ENCODE measurements at regions of chr17 and their contacts with region 1.

Region 1: GRCh38 chr17:75205037-75205792 is at the start of gene NUP85:
- DNase-seq: peak; percentile 65 to 95
- H3K4me3 ChIP-seq: peak within 1 kb of the TSS; percentile 81 to 98
- H3K27ac ChIP-seq: peak within 1 kb of the TSS; percentile 84 to 91
- H3K4me1 ChIP-seq: peaks cover 0 to 7% of the 10 kb centered on the region in 2 donors
- H3K27me3 ChIP-seq: no peaks in the 10 kb centered on the region
- CTCF ChIP-seq: peak in 1 of 3 experiments; percentile 14
- total RNA-seq, gene NUP85: 38.1 TPM

Region 2: GRCh38 chr17:75046582-75047289 is 158.5 kb before region 1 on chr17 and contains the starts of genes ATP5PD and KCTD2:
- intact Hi-C with region 1: loop called (anchors 1 kb)
- DNase-seq: peak; percentile 88 to 98
- H3K4me3 ChIP-seq: peak within 1 kb of the TSS; percentile 64 to 74
- H3K27ac ChIP-seq: peak within 1 kb of the TSS; percentile 90
- H3K4me1 ChIP-seq: peaks cover 9 to 13% of the 10 kb centered on the region in 2 donors
- H3K27me3 ChIP-seq: no peaks in the 10 kb centered on the region
- CTCF ChIP-seq: no peak
- total RNA-seq, gene ATP5PD: 133 TPM
- total RNA-seq, gene KCTD2: 31.4 TPM

Region 3: GRCh38 chr17:75182569-75183450 is 22.4 kb before region 1 on chr17 and contains the start of gene SUMO2:
- intact Hi-C with region 1: loop called (anchors 2 kb)
- DNase-seq: peak; percentile 70 to 97
- H3K4me3 ChIP-seq: peak within 1 kb of the TSS; percentile 80 to 97
- H3K27ac ChIP-seq: peak within 1 kb of the TSS; percentile 94 to 100
- H3K4me1 ChIP-seq: peaks cover 6 to 18% of the 10 kb centered on the region in 2 donors
- H3K27me3 ChIP-seq: no peaks in the 10 kb centered on the region
- CTCF ChIP-seq: peak in 2 of 3 experiments; percentile 43 to 45
- total RNA-seq, gene SUMO2: 23.9 TPM

Region 4: DNA sequence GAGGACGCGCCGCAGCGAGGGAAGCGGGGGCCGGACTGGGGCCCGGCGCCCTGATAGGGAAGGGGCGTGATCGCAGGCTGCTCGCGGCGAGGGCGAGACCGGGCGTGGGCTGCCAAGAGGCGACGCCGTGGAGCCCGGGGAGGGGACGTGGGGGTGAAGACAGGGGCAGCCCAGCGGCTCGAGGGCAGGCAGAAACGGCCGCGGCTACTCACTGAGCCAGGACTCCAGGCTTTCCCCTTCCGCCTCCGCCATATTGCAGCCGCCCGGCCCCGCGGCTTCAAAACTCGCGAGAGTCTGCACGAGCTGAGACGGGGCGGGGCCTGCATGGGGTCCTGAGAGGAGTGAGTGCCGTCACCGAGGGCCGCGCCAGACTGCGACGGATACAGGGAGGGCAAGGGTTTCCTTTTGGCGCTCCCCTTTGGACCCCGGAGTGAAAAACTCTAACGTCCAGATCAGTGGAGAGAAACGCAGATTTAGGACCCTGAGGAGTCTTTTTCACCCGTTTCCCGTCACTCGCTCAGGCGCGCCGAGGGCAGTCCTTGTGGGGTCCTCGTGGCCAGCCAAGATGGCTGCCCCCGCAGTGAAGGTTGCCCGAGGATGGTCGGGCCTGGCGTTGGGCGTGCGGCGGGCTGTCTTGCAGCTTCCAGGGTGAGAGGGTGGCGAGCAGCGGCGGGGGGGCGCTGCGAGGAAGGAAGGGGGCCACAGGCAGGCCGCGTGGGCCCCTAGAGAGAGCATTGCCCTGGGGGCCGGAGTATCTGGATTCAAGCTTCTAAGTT is 56.3 kb after region 1 on chr17 and contains the starts of genes GGA3 and MRPS7:
- intact Hi-C with region 1: loop called (anchors 5 kb)
- DNase-seq: peak; percentile 76 to 98
- H3K4me3 ChIP-seq: peak within 1 kb of the TSS; percentile 88 to 97
- H3K27ac ChIP-seq: peak within 1 kb of the TSS; percentile 86 to 93
- H3K4me1 ChIP-seq: peaks cover 3 to 26% of the 10 kb centered on the region in 2 donors
- H3K27me3 ChIP-seq: no peaks in the 10 kb centered on the region
- CTCF ChIP-seq: peak in 1 of 3 experiments; percentile 3
- total RNA-seq, gene GGA3: 84.6 TPM
- total RNA-seq, gene MRPS7: 24.1 TPM

Measured in ascending aorta (tissue), 2 donors.